ENCODE measurements at regions of chr19 and their contacts with region 1.

Region 1: GRCh38 chr19:40521276-40521675 is 54.5 kb downstream of the SPTBN4 start:
- DNase-seq: no peak
- ATAC-seq: no peak

Region 2: GRCh38 chr19:40305403-40305802 is 215.9 kb before region 1 on chr19:
- intact Hi-C with region 1: loop called (anchors 2 kb)
- DNase-seq: no peak
- ATAC-seq: no peak

Region 3: DNA sequence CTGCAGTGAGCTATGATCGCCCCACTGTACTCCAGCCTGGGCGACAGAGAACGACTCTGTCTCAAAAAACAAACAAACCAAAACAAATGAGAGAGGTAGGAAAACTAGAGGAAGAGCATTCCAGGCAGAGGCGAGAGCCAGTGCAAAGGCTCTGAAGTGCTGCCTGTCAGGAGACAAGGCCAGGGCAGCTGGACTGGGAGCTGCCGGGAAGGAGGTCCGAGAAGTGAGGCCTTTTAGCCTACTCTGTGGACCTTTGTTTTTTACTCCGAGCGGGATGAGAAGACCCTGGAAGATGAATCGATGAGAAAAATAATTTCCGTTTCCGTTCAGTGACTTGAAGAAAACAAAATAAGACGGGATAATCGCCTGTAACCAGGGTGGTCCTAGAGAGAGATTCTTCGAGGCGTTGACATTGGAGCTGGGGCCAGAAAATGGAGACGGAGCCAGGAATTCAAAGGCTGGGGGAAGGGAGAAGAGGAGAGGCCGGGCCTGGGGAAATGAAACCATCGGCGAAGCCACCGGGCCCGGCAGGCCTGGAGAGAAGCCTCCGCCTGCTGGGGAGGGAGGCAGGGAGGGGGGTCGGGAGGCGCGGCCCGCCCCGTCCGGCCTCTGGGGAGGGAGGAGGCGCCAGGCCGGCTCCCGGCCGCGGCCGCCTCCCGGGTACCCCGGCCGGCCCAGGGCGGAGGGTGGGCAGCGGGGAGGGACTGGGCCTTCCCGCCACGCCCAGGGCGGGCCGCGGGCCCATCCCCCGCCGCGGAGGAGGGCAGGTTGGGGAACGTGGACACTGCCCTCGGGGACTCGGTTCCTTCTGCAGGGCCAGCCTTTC is 87.7 kb before region 1 on chr19:
- intact Hi-C with region 1: no loop called
- DNase-seq: peak; percentile 91
- ATAC-seq: peak; percentile 98

Region 4: GRCh38 chr19:40502647-40503319 is 18.5 kb before region 1 on chr19:
- intact Hi-C with region 1: no loop called
- DNase-seq: no peak
- ATAC-seq: no peak

Measured in Right ventricle myocardium inferior (tissue), 1 donor.